Common myeloid progenitor, CD34-positive (primary cell): ENCODE measurements at regions of chr16 and their contacts with region 1.

Region 1: GRCh38 chr16:30902029-30902972 is 5.9 kb downstream of the CTF1 start:
- DNase-seq: peak; percentile 54 to 78 (median 73)
- H3K4me3 ChIP-seq: peak overlapping the region; percentile 58 to 82 (median 75)
- H3K27ac ChIP-seq: peak overlapping the region; percentile 77 to 81
- H3K4me1 ChIP-seq: peaks cover 1 to 51% (median 40%) of the 10 kb centered on the region in 4 experiments
- H3K27me3 ChIP-seq: no peaks in the 10 kb centered on the region

Region 2: DNA sequence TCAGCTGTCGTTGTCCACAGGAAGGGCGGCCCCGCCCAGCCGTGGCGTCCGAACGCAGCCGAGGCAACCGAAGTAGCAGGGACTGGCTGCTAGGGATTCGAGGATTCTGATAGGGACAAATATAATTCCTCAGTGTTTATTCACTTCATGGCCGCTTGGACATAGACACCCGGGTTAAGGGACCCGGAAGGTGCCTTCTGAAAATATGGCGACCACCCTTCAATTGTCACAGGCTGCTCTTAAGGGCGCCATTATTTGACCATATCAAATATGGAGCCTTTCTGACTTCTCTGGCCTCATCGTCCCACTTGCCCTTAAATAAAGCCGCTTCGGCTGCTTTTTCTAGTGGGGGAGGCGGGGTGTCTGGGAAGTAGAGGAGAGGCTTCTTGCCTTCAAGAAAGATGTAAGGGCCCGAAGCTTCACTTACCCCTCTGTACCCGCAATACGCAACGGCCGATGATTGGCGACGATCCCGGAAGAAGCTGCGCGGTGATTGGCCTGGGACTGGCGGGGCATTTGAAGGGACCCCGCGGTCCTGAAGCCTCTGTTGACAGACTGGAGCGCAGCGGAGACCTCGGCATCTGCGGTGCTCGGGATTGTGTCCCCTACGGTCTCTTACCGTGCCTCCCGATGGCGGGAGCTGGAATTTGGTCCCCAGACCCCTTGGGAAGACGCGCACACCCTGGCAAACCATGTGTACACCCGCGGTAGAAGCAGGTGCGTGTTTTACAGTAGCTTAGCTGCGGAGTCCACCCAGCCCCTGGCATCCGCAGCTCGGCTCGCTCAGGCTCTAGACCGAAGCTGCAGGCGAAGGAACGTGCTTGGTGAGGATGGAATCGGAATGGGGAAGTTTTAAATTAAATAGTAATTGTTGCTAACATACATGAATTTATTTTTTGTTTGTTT is 330.4 kb before region 1 on chr16 and contains the start of gene ZNF688:
- CTCF ChIA-PET with region 1: no interaction called
- POLR2A ChIA-PET with region 1: no interaction called
- DNase-seq: peak; percentile 99 to 100 (median 99)
- H3K4me3 ChIP-seq: peak within 1 kb of the TSS; percentile 71 to 93 (median 86)
- H3K27ac ChIP-seq: peak within 1 kb of the TSS; percentile 90 to 94
- H3K4me1 ChIP-seq: peaks cover 7 to 56% (median 36%) of the 10 kb centered on the region in 4 experiments
- H3K27me3 ChIP-seq: no peaks in the 10 kb centered on the region

Region 3: DNA sequence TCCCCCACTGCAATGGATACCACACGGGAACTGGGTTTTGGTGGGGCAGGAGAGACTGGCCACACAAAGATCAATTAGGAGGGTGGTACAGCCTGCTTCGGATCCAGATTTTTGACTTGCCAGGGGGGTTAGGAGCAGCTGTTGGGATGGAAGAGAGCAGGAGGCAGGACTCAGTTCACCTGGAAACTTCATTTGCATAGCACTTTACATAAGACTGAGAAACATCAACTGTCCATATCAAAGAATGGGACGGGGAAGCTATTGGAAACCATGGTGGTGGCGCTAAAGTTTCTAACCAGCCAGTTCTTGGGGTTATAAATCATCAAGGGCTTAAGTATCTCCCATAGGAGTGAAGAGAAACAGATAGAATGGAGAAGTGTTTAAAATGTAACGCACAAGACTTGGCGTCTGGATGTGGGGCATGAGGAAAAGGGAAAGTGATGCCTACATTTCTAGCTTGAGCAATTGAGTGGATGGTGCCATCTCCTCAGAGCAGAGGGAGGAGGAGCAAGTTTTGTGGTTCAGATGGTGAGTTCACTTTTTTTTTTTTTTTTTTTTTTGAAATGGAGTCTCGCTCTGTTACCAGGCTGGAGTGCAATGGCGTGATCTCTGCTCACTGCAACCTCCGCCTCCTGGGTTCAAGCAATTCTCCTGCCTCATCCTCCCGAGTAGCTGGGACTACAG is 209.8 kb before region 1 on chr16:
- CTCF ChIA-PET with region 1: no interaction called
- POLR2A ChIA-PET with region 1: no interaction called
- DNase-seq: peak in 2 of 3 donors; percentile 52 to 54
- H3K4me3 ChIP-seq: no peak overlapping the region
- H3K27ac ChIP-seq: no peak overlapping the region
- H3K4me1 ChIP-seq: peaks cover 4 to 32% (median 30%) of the 10 kb centered on the region in 4 experiments
- H3K27me3 ChIP-seq: no peaks in the 10 kb centered on the region

Region 4: DNA sequence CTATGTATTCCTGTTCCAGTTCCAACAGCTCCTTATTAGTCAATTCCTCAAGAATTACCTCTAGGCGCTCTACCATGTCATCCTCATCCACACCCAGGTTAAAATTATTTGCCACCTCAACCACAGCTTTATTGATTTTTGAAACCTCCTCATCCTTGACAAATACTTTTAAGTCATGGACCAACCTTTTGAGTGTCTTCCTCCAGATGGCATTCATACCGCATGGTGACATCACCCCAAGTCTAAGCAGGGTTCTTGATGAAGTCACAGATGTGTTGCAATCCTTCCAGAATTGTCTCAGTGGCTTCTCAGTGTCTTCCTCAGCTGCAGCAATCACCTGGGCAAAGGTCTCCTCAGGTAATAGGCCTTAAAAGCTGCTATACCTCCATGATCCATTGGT is 48.5 kb before region 1 on chr16:
- CTCF ChIA-PET with region 1: interaction called, 17 read pairs
- POLR2A ChIA-PET with region 1: no interaction called
- DNase-seq: no peak
- H3K4me3 ChIP-seq: no peak overlapping the region
- H3K27ac ChIP-seq: no peak overlapping the region
- H3K4me1 ChIP-seq: peaks cover 0 to 7% (median 1%) of the 10 kb centered on the region in 4 experiments
- H3K27me3 ChIP-seq: no peaks in the 10 kb centered on the region

Region 5: GRCh38 chr16:30874821-30875717 is 27.2 kb before region 1 on chr16:
- CTCF ChIA-PET with region 1: interaction called, 28 read pairs
- POLR2A ChIA-PET with region 1: interaction called, 11 read pairs
- DNase-seq: peak; percentile 90 to 94 (median 91)
- H3K4me3 ChIP-seq: peak overlapping the region; percentile 67 to 95 (median 91)
- H3K27ac ChIP-seq: peak overlapping the region; percentile 78 to 95
- H3K4me1 ChIP-seq: peaks cover 5 to 30% (median 23%) of the 10 kb centered on the region in 4 experiments
- H3K27me3 ChIP-seq: no peaks in the 10 kb centered on the region

Region 6: DNA sequence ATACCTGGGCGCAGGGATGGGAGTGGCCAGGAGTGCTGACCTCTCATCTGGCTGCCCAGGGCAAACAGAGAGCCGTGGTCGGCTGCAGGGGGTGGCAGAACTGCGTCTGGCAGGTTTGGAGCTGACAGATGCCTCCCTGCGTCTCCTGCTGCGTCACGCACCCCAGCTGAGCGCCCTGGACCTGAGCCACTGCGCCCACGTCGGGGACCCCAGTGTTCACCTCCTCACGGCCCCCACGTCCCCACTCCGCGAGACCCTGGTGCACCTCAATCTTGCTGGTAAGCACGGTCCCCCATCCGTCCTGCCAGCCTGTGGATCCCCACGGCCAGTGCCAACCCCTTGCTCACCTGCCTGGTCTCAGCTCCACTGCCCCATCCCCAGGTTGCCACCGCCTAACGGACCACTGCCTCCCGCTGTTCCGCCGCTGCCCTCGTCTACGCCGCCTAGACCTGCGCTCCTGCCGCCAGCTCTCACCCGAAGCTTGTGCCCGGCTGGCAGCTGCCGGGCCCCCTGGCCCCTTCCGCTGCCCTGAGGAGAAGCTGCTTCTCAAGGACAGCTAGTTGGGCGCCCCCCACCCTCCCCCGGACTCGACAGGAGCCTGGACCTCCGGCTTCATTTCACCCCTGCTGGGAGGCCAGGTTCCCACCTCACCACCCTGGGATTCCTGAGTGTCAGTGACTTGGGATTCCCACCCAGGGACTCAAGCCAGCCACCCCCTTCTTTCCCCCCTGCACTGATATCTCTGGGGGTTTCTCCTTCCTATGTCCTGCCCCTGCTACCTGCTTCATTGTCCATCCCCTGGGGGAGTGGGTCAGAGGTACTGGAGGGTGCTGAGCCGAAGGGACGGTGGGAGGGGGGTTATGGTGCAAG is 44.6 kb after region 1 on chr16:
- CTCF ChIA-PET with region 1: no interaction called
- POLR2A ChIA-PET with region 1: no interaction called
- DNase-seq: no peak
- H3K4me3 ChIP-seq: no peak overlapping the region
- H3K27ac ChIP-seq: peak overlapping the region in 1 of 2 experiments; percentile 34
- H3K4me1 ChIP-seq: peaks cover 2 to 34% (median 30%) of the 10 kb centered on the region in 4 experiments
- H3K27me3 ChIP-seq: no peaks in the 10 kb centered on the region